Dendritic cell treated with granulocyte-macrophage colony-stimulating factor and Interleukin-4, amounts not matched to agents 40 ng/mL and 50 ng/mL, for 4 days (primary cell): ENCODE measurements at regions of chr1 and their contacts with region 1.

Region 1: DNA sequence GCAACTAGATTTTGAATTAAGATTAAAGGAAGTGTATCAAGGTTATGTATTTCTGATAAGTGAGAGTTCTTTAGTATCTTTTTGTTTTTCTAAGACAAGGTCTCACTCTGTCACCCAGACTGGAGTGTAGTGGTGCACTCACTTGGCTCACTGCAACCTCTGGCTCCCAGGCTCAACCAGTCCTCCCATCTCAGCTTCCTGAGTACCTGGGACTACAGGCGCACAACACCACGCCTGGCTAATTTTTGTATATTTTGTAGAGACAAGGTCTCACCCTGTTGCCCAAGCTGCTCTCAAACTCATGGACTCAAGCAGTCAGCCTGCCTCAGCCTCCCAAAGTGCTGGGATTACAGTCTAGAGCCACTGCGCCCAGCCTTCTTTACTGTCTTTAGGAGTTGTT is 33.7 kb downstream of the DHX9 start:
- H3K4me3 Mint-ChIP-seq: no peak overlapping the region
- H3K27ac Mint-ChIP-seq: no peak overlapping the region
- H3K4me1 Mint-ChIP-seq: no peaks in the 10 kb centered on the region
- H3K27me3 Mint-ChIP-seq: no peaks in the 10 kb centered on the region

Region 2: DNA sequence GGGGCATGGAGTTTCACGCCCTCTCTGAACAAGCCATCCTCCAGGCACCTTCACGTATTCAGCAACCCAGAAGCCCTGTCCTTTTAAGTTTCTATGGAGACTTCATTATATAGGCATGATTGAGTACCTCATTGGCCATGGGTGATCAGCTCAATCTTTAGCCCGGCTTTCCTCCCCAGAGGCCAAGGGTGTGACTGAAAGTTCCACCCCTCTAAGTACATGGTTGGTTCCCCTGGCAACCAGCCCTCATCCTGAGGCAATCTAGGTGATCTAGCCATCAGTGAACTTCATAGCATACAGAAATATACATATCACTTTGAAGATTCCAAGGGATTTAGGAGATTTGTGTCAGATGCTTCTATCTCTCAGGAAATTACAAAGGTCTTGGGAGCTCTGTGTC is 55.1 kb before region 1 on chr1:
- intact Hi-C with region 1: loop called (anchors 5 kb)
- H3K4me3 Mint-ChIP-seq: no peak overlapping the region
- H3K27ac Mint-ChIP-seq: no peak overlapping the region
- H3K4me1 Mint-ChIP-seq: peaks cover 13% of the 10 kb centered on the region
- H3K27me3 Mint-ChIP-seq: no peaks in the 10 kb centered on the region

Region 3: GRCh38 chr1:182927693-182928433 is 55.0 kb after region 1 on chr1:
- intact Hi-C with region 1: no loop called
- H3K4me3 Mint-ChIP-seq: no peak overlapping the region
- H3K27ac Mint-ChIP-seq: no peak overlapping the region
- H3K4me1 Mint-ChIP-seq: no peaks in the 10 kb centered on the region
- H3K27me3 Mint-ChIP-seq: peaks cover 8% of the 10 kb centered on the region